ENCODE measurements at regions of chr20 and their contacts with region 1.

Region 1: DNA sequence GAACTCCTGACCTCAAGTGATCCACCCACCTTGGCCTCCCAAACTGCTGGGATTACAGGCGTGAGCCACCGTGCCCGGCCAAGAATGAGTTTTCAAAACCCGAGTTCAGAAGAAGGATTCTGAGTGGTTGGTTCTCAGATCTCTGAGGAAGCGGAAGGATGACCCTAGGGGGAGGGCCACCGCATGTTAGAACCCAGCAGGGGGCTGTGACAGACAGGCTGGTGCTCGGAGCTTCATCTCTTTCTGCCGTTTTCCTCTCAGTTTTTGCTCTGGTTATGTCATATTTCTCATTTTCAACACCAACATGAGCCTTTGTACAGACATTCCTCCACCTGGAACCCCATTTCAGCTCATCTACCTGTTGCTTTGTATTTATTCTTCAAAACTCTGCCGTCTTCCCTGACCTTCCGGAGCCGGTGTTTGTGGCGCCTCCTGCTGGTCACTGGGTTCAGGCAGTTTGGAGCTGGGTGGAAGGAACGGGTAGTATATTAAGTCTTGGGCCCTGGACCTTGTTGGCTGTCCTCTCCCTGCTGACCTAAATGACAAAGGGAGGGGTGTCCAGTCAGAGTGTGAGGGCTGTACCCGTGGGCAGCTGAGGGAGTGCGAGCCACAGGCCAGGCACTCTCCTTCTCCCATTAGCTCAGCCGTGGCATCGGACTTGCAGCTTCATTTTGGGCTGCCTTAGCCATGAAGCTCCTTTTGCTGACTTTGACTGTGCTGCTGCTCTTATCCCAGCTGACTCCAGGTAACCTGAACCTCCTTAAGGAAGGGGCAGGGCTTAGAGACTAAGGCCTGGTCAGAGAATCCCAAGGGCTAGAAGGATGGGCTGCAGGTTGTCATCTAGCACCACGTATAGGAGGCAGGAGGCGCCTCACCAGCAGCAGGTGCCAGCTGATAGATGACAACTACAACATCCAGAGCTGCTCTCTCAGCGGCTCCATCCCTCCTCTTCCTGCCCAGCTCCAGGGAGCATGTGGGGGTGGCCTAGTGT is at the start of gene DEFB123:
- DNase-seq: peak in 1 of 3 donors; percentile 19
- ATAC-seq: no peak
- H3K4me3 ChIP-seq: no peak within 1 kb of the TSS
- H3K27ac ChIP-seq: no peak within 1 kb of the TSS
- H3K4me1 ChIP-seq: no peaks in the 10 kb centered on the region
- H3K27me3 ChIP-seq: no peaks in the 10 kb centered on the region
- total RNA-seq, gene DEFB123: not detected

Region 2: GRCh38 chr20:30500829-30501440 is 939.4 kb before region 1 on chr20:
- intact Hi-C with region 1: no loop called
- DNase-seq: no peak
- ATAC-seq: no peak
- H3K4me3 ChIP-seq: no peak overlapping the region
- H3K27ac ChIP-seq: no peak overlapping the region
- H3K4me1 ChIP-seq: no peaks in the 10 kb centered on the region
- H3K27me3 ChIP-seq: no peaks in the 10 kb centered on the region

Region 3: DNA sequence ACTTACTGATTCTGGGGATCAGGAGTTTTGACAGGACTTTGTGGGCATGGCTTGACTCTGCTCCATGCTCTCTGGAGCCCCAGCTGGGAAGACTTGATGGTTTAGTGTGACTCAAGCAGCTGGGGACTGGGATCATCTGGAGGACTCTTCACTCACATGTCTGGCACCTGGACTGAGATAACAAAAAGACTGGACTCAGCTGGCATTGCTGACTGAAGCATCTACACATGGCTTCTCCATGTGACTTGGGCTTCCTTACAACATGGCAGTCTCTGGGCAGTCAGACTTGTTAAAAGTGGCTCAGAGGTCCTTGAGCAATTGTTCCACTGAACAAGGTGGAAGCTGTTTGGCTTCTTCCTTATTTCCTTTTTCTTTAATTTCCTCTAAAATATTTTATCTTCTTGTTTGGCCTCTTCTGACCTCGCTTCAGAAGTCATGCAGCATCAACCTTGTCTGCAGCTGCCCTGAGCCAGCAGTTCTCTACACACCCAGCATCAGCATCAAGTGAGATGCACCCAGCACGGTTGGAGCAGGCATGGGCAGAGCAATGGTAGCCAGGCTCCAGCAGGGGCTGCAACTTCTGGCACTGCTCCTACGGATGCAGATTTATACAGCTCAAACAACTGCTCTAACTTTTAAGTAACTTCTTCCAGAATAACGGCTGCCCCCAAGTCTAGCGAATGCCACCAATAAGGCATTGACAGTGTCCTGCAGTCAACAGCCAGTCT is 68.4 kb after region 1 on chr20:
- intact Hi-C with region 1: loop called in 1 of 4 experiments (anchors 10 kb)
- DNase-seq: no peak
- ATAC-seq: no peak
- H3K4me3 ChIP-seq: no peak overlapping the region
- H3K27ac ChIP-seq: no peak overlapping the region
- H3K4me1 ChIP-seq: no peaks in the 10 kb centered on the region
- H3K27me3 ChIP-seq: no peaks in the 10 kb centered on the region

Region 4: DNA sequence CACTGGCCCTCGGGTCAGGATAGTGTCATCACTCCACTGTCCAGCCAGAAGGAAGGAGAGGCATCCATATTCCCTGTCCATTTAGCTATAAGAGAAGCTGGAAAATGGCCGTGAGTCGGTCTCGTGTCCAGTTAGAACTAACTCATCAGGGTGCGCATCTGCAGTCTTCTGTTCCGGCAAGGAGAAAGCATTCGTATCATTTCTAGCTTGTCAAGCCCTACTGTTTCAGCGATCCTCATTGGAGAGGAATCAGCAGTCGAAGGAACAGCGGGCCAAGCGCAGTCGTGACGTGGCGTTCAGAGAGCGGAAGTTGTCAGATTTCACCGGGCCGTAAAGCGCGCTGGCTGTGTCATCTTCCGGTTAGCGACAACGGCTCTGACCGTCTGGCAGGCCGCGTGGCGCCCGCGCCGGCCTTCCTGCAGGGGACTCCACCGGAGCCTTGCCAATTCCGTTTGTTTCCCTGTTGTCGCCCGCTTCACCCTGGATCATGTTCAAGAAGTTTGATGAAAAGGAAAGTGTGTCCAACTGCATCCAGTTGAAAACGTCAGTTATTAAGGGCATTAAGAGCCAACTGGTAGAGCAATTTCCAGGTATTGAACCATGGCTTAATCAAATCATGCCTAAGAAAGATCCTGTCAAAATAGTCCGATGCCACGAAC is 106.8 kb after region 1 on chr20:
- intact Hi-C with region 1: no loop called
- DNase-seq: peak; percentile 90 to 94 (median 93)
- ATAC-seq: peak; percentile 76 to 79
- H3K4me3 ChIP-seq: peak overlapping the region; percentile 55
- H3K27ac ChIP-seq: peak overlapping the region; percentile 94
- H3K4me1 ChIP-seq: no peaks in the 10 kb centered on the region
- H3K27me3 ChIP-seq: no peaks in the 10 kb centered on the region

Measured in right cardiac atrium (tissue), 5 donors.